ENCODE measurements at regions of chr1 and their contacts with region 1.

Region 1: DNA sequence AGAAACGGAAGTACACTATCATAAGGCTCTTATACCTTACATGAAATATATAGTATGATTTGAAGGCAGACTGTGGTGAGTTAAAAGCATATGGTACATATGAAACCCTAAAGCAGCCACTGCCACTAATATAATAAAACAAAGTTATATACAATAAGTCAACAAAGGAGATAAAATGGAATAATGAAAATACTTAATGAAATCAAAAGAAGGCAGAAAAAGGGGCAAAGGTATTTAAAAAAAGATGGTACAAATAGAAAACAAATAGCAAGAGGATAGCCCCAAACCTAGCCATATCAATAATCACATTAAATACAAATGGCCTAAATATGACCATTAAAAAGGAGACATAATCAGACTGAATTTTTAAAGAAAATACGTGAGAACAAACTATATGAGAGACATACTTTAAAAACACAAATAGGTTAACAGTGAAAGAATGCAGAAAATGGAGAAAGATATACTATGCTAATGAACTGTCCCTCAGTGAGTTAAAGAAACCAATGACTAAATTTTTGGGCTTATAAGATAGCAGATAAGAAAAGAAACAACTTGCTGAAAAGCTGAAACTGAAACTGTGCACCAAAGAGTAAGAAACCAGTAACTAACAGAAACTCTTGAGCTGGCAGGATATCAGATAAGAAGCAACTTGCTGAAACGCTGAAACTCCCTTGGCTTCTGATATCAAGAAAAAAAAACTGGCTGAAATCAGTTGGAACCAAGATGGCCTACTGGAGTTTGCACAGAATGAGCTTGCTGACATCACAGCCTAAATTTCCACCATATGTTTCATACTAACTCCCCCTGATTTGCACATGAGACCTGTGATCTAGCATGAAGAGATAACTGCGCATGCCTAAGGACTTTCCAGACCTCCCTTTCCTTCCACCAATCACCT is 44.3 kb upstream of the IL10 start:
- DNase-seq: peak in 2 of 9 experiments; percentile 66 to 78
- ATAC-seq: peak; percentile 83
- H3K4me3 ChIP-seq: no peak overlapping the region
- H3K4me3 Mint-ChIP-seq: peak overlapping the region; percentile 49
- H3K27ac ChIP-seq: peak overlapping the region; percentile 1 to 47
- H3K27ac Mint-ChIP-seq: peak overlapping the region; percentile 86
- H3K4me1 ChIP-seq: peaks cover 12% of the 10 kb centered on the region
- H3K4me1 Mint-ChIP-seq: peaks cover 19% of the 10 kb centered on the region
- H3K27me3 ChIP-seq: no peaks in the 10 kb centered on the region
- H3K27me3 Mint-ChIP-seq: no peaks in the 10 kb centered on the region
- CTCF ChIP-seq: no peak

Region 2: GRCh38 chr1:206890690-206891089 is 74.1 kb after region 1 on chr1:
- CTCF ChIA-PET with region 1: no interaction called
- POLR2A ChIA-PET with region 1: no interaction called
- intact Hi-C with region 1: loop called in 1 of 2 experiments (anchors 2 kb)
- DNase-seq: peak in 1 of 9 experiments; percentile 34
- ATAC-seq: peak; percentile 46
- H3K4me3 ChIP-seq: no peak overlapping the region
- H3K4me3 Mint-ChIP-seq: peak overlapping the region; percentile 61
- H3K27ac ChIP-seq: no peak overlapping the region
- H3K27ac Mint-ChIP-seq: no peak overlapping the region
- H3K4me1 ChIP-seq: peaks cover 5% of the 10 kb centered on the region
- H3K4me1 Mint-ChIP-seq: peaks cover 28% of the 10 kb centered on the region
- H3K27me3 ChIP-seq: no peaks in the 10 kb centered on the region
- H3K27me3 Mint-ChIP-seq: no peaks in the 10 kb centered on the region
- CTCF ChIP-seq: no peak

Region 3: DNA sequence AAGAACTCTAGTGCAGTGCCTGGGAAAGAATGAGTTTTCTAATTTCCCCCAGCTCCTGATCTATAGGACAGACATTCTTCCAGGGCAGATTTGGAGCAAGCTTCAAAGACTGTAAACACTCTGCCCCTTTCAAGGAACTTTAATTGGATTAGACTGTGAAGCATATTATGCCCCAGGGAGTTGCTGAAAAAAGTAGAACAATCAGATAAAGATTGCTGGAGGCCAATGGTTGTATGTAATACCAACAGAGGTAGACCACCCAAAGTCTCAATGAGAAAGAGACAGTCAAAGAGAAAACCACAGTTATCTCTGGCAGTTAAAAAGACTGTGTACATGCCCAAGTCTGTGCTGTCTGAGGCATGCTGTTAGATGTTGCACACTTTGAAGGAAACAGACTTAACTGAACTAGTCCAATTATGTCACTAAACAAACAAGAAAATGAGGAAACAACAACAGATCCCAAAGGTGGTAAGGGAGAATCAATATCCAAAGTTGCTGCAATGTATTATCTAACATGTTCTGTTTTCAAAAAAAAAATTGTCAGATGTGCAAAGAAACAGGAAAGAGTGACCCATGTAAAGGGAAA is 311.8 kb after region 1 on chr1:
- CTCF ChIA-PET with region 1: no interaction called
- POLR2A ChIA-PET with region 1: no interaction called
- intact Hi-C with region 1: no loop called
- DNase-seq: no peak
- ATAC-seq: no peak
- H3K4me3 ChIP-seq: no peak overlapping the region
- H3K4me3 Mint-ChIP-seq: no peak overlapping the region
- H3K27ac ChIP-seq: no peak overlapping the region
- H3K27ac Mint-ChIP-seq: no peak overlapping the region
- H3K4me1 ChIP-seq: no peaks in the 10 kb centered on the region
- H3K4me1 Mint-ChIP-seq: no peaks in the 10 kb centered on the region
- H3K27me3 ChIP-seq: no peaks in the 10 kb centered on the region
- H3K27me3 Mint-ChIP-seq: peaks cover 6% of the 10 kb centered on the region
- CTCF ChIP-seq: no peak

Region 4: GRCh38 chr1:207470927-207471326 is 654.3 kb after region 1 on chr1:
- CTCF ChIA-PET with region 1: no interaction called
- POLR2A ChIA-PET with region 1: no interaction called
- intact Hi-C with region 1: no loop called
- DNase-seq: peak in 3 of 9 experiments; percentile 53 to 71 (median 58)
- ATAC-seq: peak; percentile 99
- H3K4me3 ChIP-seq: no peak overlapping the region
- H3K4me3 Mint-ChIP-seq: no peak overlapping the region
- H3K27ac ChIP-seq: no peak overlapping the region
- H3K27ac Mint-ChIP-seq: peak overlapping the region; percentile 41
- H3K4me1 ChIP-seq: peaks cover 11% of the 10 kb centered on the region
- H3K4me1 Mint-ChIP-seq: peaks cover 30% of the 10 kb centered on the region
- H3K27me3 ChIP-seq: no peaks in the 10 kb centered on the region
- H3K27me3 Mint-ChIP-seq: no peaks in the 10 kb centered on the region
- CTCF ChIP-seq: no peak

Region 5: GRCh38 chr1:207603777-207604176 is 787.1 kb after region 1 on chr1:
- CTCF ChIA-PET with region 1: no interaction called
- POLR2A ChIA-PET with region 1: no interaction called
- intact Hi-C with region 1: no loop called
- DNase-seq: no peak
- ATAC-seq: no peak
- H3K4me3 ChIP-seq: no peak overlapping the region
- H3K4me3 Mint-ChIP-seq: no peak overlapping the region
- H3K27ac ChIP-seq: no peak overlapping the region
- H3K27ac Mint-ChIP-seq: no peak overlapping the region
- H3K4me1 ChIP-seq: no peaks in the 10 kb centered on the region
- H3K4me1 Mint-ChIP-seq: no peaks in the 10 kb centered on the region
- H3K27me3 ChIP-seq: no peaks in the 10 kb centered on the region
- H3K27me3 Mint-ChIP-seq: no peaks in the 10 kb centered on the region
- CTCF ChIP-seq: no peak